Lower leg skin (tissue), 4 donors: ENCODE measurements at regions of chr15 and their contacts with region 1.

Region 1: GRCh38 chr15:85504749-85505676 is 124.6 kb downstream of the AKAP13 start:
- DNase-seq: peak in 1 of 2 donors; percentile 73
- H3K4me3 ChIP-seq: no peak overlapping the region
- CTCF ChIP-seq: no peak
- POLR2A ChIP-seq: no peak

Region 2: GRCh38 chr15:85296615-85297402 is 208.2 kb before region 1 on chr15:
- intact Hi-C with region 1: loop called (anchors 10 kb)
- DNase-seq: peak; percentile 73 to 88
- H3K4me3 ChIP-seq: no peak overlapping the region
- CTCF ChIP-seq: peak in 1 of 3 donors; percentile 64
- POLR2A ChIP-seq: no peak

Region 3: DNA sequence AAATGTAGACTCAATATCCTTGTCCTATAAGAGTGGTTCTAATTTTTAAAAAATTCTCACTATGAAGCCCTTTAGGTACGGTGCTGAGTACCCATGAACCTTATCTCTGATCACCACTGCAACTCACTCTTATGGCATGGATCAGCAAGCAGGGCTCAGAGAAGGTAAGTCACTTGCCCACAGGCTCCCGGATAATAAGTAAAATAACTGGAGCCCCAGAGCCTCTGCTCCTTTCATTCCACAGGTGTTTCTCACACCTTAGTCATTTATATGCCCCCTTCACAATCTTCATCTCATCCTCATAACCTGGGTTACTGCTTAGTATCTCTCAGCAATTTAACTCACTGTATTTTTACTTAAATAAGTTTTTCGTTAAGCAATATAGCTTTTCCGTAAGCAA is 153.1 kb before region 1 on chr15:
- intact Hi-C with region 1: no loop called
- DNase-seq: no peak
- H3K4me3 ChIP-seq: no peak overlapping the region
- CTCF ChIP-seq: no peak
- POLR2A ChIP-seq: no peak